ENCODE measurements at regions of chr19 and their contacts with region 1.

Region 1: DNA sequence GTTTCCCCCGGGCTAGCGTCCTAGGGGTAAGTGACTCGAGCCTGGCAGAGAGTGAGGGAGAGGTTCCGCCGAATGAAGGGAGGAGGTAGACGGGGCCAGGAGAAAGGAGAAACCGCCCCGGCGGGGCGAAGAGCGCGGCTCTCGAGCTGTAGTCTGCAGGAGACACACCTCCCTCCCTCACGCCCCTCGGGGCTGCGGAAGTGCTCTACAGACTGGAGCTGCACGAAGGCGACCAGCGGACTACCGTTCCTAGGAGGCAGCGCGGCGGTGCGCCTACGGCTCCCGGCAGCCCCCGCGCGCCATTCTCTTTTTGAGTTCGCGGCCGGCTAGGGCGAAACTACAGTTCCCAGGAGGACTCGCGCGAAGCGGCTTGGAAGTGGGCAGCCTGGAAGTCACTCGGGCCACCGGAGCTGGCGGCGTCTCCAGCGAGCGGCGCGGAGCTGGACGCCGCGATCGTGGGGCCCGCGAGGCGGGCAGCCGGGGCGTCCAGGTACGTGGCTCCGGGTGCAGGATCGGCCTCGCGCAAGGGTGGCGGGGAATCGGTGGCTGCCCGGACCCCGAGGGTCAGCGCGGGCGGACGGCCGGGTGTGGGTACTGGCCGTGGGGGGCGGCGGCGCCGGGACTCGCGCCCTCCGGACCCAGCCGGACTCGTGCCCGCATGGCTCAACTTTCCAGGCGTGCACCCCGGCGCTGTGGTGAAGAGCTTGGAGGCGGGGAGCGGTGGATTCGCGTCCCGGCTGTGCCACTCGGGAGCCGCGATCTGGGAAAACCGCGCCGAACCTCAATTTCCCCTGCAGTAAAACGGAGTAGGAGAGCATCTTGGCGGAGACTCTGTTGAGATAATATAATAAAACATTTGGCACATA is at the start of gene SIPA1L3:
- DNase-seq: peak; percentile 99
- ATAC-seq: peak; percentile 91 to 97
- H3K4me3 ChIP-seq: peak within 1 kb of the TSS; percentile 69
- H3K27ac ChIP-seq: peak within 1 kb of the TSS; percentile 83 to 87
- H3K4me1 ChIP-seq: peaks cover 30% of the 10 kb centered on the region
- CTCF ChIP-seq: no peak; the same call in 2 of the 3 replicates
- EP300 ChIP-seq: no peak; a peak in 1 of 5 replicates
- POLR2A ChIP-seq: peak; percentile 74
- RAD21 ChIP-seq: peak; percentile 16 to 45
- polyA plus RNA-seq, gene SIPA1L3: 28.9 and 47.8 TPM in 2 replicates

Region 2: DNA sequence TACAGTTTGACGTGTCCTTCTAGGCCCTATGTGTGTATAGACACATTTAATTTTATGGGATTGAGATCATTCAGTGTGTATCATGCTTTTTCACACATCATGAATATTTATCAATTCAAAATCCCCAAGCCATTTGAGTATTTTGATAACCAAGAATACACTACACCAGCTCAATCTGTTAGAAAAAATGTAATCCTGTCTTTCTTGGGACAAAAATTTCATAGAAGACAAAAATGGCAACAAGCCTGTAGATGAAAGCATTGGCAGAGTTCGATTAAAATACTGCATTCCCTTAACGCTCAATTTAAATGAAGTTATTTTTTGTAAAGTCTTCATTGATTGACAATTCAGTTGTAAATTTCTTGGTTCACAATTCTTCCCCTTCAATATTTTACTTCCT is 42.6 kb before region 1 on chr19:
- CTCF ChIA-PET with region 1: no interaction called
- POLR2A ChIA-PET with region 1: no interaction called
- DNase-seq: no peak
- ATAC-seq: no peak
- H3K4me3 ChIP-seq: no peak overlapping the region
- H3K27ac ChIP-seq: no peak overlapping the region
- H3K4me1 ChIP-seq: no peaks in the 10 kb centered on the region
- CTCF ChIP-seq: no peak
- EP300 ChIP-seq: no peak
- POLR2A ChIP-seq: no peak
- RAD21 ChIP-seq: no peak

Region 3: GRCh38 chr19:37893845-37894575 is 13.1 kb before region 1 on chr19:
- CTCF ChIA-PET with region 1: interaction called, 52 read pairs
- POLR2A ChIA-PET with region 1: no interaction called
- DNase-seq: no peak
- ATAC-seq: no peak
- H3K4me3 ChIP-seq: no peak overlapping the region
- H3K27ac ChIP-seq: no peak overlapping the region
- H3K4me1 ChIP-seq: no peaks in the 10 kb centered on the region
- CTCF ChIP-seq: no peak
- EP300 ChIP-seq: no peak
- POLR2A ChIP-seq: no peak
- RAD21 ChIP-seq: no peak

Region 4: GRCh38 chr19:37999309-38000213 is 92.5 kb after region 1 on chr19:
- CTCF ChIA-PET with region 1: interaction called, 391 read pairs
- POLR2A ChIA-PET with region 1: interaction called, 12 read pairs
- DNase-seq: peak; percentile 94 to 97
- ATAC-seq: peak; percentile 87
- H3K4me3 ChIP-seq: 0 out of 3 replicates have a peak overlapping the region, but pooled peaks have one; percentile 0
- H3K27ac ChIP-seq: peak overlapping the region; percentile 76 to 87
- H3K4me1 ChIP-seq: peaks cover 57% of the 10 kb centered on the region
- CTCF ChIP-seq: no peak
- EP300 ChIP-seq: peak; percentile 82 to 94; a peak in 3 of 5 replicates
- POLR2A ChIP-seq: no peak
- RAD21 ChIP-seq: peak; percentile 4 to 53; a peak in 4 of 5 replicates

Region 5: GRCh38 chr19:38062959-38063761 is 156.1 kb after region 1 on chr19:
- CTCF ChIA-PET with region 1: interaction called, 28 read pairs
- POLR2A ChIA-PET with region 1: no interaction called
- DNase-seq: no peak
- ATAC-seq: peak; percentile 4 to 15; a peak in 3 of 6 replicates
- H3K4me3 ChIP-seq: no peak overlapping the region
- H3K27ac ChIP-seq: peak overlapping the region in 1 of 2 experiments; percentile 24; a peak in 1 of 6 replicates
- H3K4me1 ChIP-seq: peaks cover 22% of the 10 kb centered on the region
- CTCF ChIP-seq: no peak
- EP300 ChIP-seq: no peak
- POLR2A ChIP-seq: no peak
- RAD21 ChIP-seq: no peak

Region 6: DNA sequence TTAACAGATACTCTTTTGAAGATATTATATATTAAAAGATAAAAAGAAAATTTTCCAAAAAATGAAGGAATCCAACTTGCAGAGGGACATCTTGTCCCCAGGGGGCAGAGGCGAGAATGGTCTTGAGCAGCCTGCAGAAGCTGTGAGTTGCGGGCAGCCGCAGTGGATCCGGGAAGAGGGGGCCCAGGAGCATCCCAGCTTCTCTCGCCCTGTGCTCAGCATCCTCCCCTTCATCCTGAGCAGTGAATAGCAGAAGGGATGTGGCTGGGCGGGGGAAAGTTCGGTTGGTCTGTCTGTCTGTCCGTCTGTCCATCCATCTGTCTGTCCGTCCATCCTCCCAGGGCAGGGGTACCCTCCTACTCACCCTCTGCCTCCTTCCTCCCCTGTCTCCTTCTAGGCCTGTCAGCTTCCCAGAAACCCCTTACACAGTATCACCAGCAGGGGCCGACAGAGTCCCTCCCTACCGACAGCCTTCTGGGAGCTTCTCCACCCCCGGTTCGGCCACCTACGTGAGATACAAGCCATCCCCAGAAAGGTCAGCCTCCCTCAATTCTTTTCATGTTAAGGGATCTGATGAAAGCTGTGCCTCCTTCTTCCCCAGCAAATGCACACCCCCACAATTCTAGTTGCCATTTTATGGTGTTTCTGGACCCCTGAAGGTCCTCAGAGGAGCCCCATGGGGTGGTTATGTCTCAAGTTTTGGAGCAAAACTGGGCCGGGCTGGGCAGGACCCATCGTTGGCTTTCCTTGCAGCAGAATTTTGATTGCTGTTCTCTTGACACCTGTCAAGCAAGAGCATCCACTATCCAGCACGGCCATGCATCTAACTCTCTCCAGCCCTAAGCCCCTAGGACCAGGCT is 235.3 kb after region 1 on chr19:
- CTCF ChIA-PET with region 1: interaction called, 133 read pairs
- POLR2A ChIA-PET with region 1: no interaction called
- DNase-seq: peak; percentile 81 to 98
- ATAC-seq: peak; percentile 84 to 90
- H3K4me3 ChIP-seq: no peak overlapping the region
- H3K27ac ChIP-seq: no peak overlapping the region
- H3K4me1 ChIP-seq: no peaks in the 10 kb centered on the region
- CTCF ChIP-seq: peak; percentile 86
- EP300 ChIP-seq: no peak
- POLR2A ChIP-seq: no peak
- RAD21 ChIP-seq: peak; percentile 73 to 91

Region 7: GRCh38 chr19:38213911-38214625 is 307.0 kb after region 1 on chr19:
- CTCF ChIA-PET with region 1: interaction called, 23 read pairs
- POLR2A ChIA-PET with region 1: no interaction called
- DNase-seq: peak in 1 of 2 experiments; percentile 81
- ATAC-seq: peak; percentile 37 to 46
- H3K4me3 ChIP-seq: no peak overlapping the region
- H3K27ac ChIP-seq: no peak overlapping the region
- H3K4me1 ChIP-seq: peaks cover 24% of the 10 kb centered on the region; the same call in 2 of the 3 replicates
- CTCF ChIP-seq: no peak
- EP300 ChIP-seq: no peak
- POLR2A ChIP-seq: no peak
- RAD21 ChIP-seq: no peak

Region 8: GRCh38 chr19:38263689-38264485 is 356.8 kb after region 1 on chr19:
- CTCF ChIA-PET with region 1: interaction called, 38 read pairs
- POLR2A ChIA-PET with region 1: no interaction called
- DNase-seq: peak; percentile 78 to 87
- ATAC-seq: peak; percentile 64 to 66
- H3K4me3 ChIP-seq: peak overlapping the region; percentile 67
- H3K27ac ChIP-seq: peak overlapping the region; percentile 89 to 91
- H3K4me1 ChIP-seq: peaks cover 51% of the 10 kb centered on the region
- CTCF ChIP-seq: no peak
- EP300 ChIP-seq: no peak; a peak in 1 of 5 replicates
- POLR2A ChIP-seq: no peak
- RAD21 ChIP-seq: no peak; a peak in 1 of 5 replicates